A673 (cell line): ENCODE measurements at regions of chr11 and their contacts with region 1.

Region 1: DNA sequence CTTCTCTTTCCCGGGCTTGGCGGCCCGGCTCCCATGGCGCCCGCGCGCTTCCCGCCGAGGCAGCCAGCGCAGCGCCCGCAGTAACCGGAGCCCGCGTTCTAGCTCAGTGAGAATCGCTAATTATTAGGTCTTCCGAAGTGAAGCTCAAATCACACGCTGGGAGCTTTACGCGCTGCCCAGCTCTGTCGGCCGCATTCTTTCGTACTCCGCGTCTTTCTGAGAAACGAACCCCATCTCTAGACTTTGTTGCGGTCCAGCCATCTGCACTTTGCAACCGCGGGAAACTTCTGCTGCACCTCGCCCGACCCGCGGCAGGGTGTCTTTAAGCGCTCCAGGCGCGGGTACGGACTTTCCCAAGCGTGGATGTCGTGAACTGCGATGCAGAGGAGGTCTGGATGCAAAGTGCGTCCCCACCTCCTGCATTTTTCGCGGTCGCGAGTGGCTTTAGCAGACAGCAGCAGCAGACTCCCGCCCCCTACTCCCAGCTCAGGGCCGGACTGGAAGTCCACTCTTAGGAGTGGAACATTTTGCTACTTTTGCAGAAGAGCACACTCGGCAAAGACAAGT is 6.0 kb upstream of the PAX6 start:
- DNase-seq: peak; percentile 81
- H3K4me3 ChIP-seq: peak overlapping the region; percentile 44
- H3K27ac ChIP-seq: no peak overlapping the region
- H3K4me1 ChIP-seq: peaks cover 58% of the 10 kb centered on the region
- H3K27me3 ChIP-seq: peaks cover 100% of the 10 kb centered on the region
- CTCF ChIP-seq: no peak

Region 2: GRCh38 chr11:31150841-31151240 is 666.3 kb before region 1 on chr11:
- CTCF ChIA-PET with region 1: no interaction called
- POLR2A ChIA-PET with region 1: no interaction called
- intact Hi-C with region 1: loop called (anchors 5 kb)
- DNase-seq: peak; percentile 95
- H3K4me3 ChIP-seq: peak overlapping the region; percentile 1
- H3K27ac ChIP-seq: peak overlapping the region; percentile 74
- H3K4me1 ChIP-seq: peaks cover 34% of the 10 kb centered on the region
- H3K27me3 ChIP-seq: no peaks in the 10 kb centered on the region
- CTCF ChIP-seq: no peak